WTC11 (cell line): ENCODE measurements at regions of chr7 and their contacts with region 1.

Region 1: DNA sequence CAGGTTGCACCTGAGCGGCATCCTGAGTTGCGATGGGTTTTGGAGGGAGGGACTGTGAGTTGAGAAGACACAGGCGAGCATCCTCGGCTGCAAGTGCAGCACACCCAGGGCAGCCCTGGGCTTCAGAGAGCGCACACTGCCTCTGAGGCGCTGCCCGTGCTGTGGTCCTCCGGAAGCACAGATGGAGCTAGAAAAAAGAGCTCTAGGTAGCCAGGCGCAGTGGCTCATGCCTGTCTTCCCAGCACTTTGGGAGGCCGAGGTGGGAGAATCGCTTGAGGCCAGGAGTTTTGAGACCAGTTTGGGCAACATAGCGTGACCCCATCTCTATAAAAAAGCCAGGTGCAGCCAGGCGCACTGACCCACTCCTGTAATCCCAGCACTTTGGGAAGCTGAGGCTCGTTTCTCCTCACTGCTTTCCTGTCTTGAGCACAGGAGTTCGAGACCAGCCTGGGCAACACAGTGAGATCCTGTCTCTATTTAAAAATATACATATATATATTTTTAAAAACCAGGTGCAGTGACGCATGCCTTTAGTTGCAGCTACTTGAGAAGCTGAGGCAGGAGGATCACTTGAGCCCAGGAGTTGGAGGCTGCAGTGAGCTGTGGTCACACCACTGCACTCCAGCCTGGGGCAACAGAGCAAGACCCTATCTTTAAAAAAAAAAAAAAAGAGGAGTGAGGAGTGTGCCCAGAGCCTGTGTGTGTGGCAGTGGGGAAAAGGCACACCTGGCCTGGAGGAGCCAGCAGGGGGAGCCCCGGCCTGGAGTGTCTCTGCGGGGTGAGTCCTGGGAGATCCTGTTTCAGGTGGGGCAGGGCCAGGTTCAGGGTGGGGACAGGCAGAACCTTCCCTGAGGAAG is 9.3 kb upstream of the ARPC1B start:
- DNase-seq: peak; percentile 79
- ATAC-seq: peak; percentile 83
- H3K4me3 Mint-ChIP-seq: no peak overlapping the region
- H3K27ac Mint-ChIP-seq: no peak overlapping the region
- H3K4me1 Mint-ChIP-seq: peaks cover 14% of the 10 kb centered on the region
- H3K27me3 Mint-ChIP-seq: no peaks in the 10 kb centered on the region
- CTCF ChIP-seq: no peak; the same call in 1 of the 2 replicates

Region 2: DNA sequence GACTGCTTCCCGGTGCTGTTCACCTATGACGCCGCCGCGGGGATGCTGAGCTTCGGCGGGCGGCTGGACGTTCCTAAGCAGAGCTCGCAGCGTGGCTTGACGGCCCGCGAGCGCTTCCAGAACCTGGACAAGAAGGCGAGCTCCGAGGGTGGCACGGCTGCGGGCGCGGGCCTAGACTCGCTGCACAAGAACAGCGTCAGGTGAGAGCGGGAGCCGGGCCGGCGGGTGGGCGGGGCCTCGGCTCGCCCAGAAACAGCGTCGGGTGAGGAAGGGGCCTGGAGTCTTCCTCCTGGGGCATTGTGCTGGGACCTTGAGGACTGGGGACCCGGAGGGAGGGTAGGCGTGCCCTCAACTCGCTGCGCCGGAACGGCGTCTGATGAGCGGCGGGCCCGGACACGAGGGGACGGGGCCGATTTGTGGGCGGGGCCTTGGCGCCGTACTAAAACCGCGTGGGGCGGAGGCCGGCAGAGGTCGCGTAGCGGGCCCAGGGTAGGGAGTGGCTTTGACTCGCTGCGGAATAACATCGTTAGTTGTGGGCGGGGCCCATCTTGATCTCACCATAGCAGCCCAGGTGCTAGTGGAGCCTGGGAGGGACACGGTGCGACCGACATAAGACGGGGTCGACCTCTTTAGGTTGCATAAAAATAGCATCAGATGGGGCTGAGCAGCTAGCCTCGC is 27.6 kb after region 1 on chr7:
- CTCF ChIA-PET with region 1: interaction called, 15 read pairs
- POLR2A ChIA-PET with region 1: interaction called, 3 read pairs
- DNase-seq: peak; percentile 86
- ATAC-seq: peak; percentile 79
- H3K4me3 Mint-ChIP-seq: peak overlapping the region; percentile 77
- H3K27ac Mint-ChIP-seq: peak overlapping the region; percentile 98
- H3K4me1 Mint-ChIP-seq: peaks cover 12% of the 10 kb centered on the region
- H3K27me3 Mint-ChIP-seq: no peaks in the 10 kb centered on the region
- CTCF ChIP-seq: no peak